ENCODE measurements at regions of chr2 and their contacts with region 1.

Region 1: GRCh38 chr2:31523871-31524492 is 56.8 kb downstream of the SRD5A2 start:
- DNase-seq: peak; percentile 48
- ATAC-seq: peak; percentile 93
- H3K4me3 ChIP-seq: no peak overlapping the region
- H3K27ac ChIP-seq: no peak overlapping the region
- H3K4me1 ChIP-seq: no peaks in the 10 kb centered on the region
- H3K27me3 ChIP-seq: peaks cover 41% of the 10 kb centered on the region
- CTCF ChIP-seq: peak; percentile 45 to 85 (median 66)
- POLR2A ChIP-seq: no peak
- RAD21 ChIP-seq: peak; percentile 51

Region 2: GRCh38 chr2:31386648-31387047 is 137.3 kb before region 1 on chr2:
- CTCF ChIA-PET with region 1: interaction called, 3 read pairs
- POLR2A ChIA-PET with region 1: no interaction called
- RAD21 ChIA-PET with region 1: no interaction called
- intact Hi-C with region 1: loop called (anchors 1 kb)
- DNase-seq: no peak
- ATAC-seq: no peak; the same call in 1 of the 2 replicates
- H3K4me3 ChIP-seq: no peak overlapping the region
- H3K27ac ChIP-seq: no peak overlapping the region
- H3K4me1 ChIP-seq: peaks cover 2 to 28% of the 10 kb centered on the region in 2 experiments; a peak in 3 of 4 replicates
- H3K27me3 ChIP-seq: no peaks in the 10 kb centered on the region; the same call in 1 of the 2 replicates
- CTCF ChIP-seq: peak; percentile 20 to 26 (median 23); a peak in 2 of 6 replicates
- POLR2A ChIP-seq: no peak
- RAD21 ChIP-seq: peak; percentile 37; the same call in 1 of the 2 replicates

Region 3: GRCh38 chr2:31413862-31414550 is 110.0 kb before region 1 on chr2:
- CTCF ChIA-PET with region 1: no interaction called
- POLR2A ChIA-PET with region 1: no interaction called
- RAD21 ChIA-PET with region 1: interaction called in 1 of 2 experiments, 3 read pairs
- intact Hi-C with region 1: loop called (anchors 2 kb)
- DNase-seq: no peak
- ATAC-seq: peak; percentile 79
- H3K4me3 ChIP-seq: no peak overlapping the region
- H3K27ac ChIP-seq: no peak overlapping the region
- H3K4me1 ChIP-seq: no peaks in the 10 kb centered on the region
- H3K27me3 ChIP-seq: peaks cover 3% of the 10 kb centered on the region; the same call in 1 of the 2 replicates
- CTCF ChIP-seq: peak; percentile 34 to 51 (median 38); a peak in 5 of 6 replicates
- POLR2A ChIP-seq: no peak
- RAD21 ChIP-seq: peak; percentile 60

Measured in HCT116 (cell line).